CD4-positive, alpha-beta T cell (primary cell): ENCODE measurements at regions of chr12 and their contacts with region 1.

Region 1: DNA sequence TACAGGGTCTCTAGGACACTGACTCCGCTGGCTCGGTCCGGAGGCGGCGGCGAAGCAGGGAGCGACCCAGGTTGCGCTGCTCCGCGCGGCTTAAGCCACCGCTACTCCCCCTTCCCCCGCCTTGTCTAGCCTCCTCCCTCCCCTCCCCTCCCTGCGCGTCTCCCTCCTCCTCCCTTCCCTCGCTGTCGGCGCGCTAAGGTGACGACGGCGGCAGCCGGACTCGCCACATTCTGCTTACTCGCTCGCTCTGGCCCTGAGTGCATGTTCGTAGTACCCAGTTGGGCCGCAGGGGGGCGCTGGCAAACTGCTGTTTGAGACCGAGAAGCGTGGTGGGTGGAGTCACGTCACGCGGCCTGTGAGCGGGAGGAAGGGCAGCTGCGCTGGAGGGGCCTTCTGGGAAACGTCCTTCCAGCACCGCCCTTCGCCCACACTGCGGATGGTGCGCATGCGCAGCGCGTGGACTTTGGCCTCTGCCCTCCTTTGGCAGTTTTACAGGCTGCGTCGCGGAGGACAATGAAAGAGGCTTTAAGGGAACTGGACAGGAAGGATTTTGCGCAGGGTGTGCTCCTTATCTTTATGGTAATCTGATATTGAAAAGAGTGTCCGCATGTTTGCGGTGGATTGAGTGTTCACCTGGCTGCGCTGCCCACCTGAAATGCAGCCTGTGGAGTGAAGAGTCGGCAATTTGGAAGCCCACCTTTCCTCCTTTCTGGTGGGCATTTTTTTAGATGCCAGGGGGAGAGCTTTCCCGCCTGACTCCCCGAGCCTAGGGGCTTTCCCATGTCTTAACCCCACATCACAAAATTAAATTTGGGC is at the start of gene SCAF11:
- DNase-seq: peak; percentile 100
- ATAC-seq: peak; percentile 76
- H3K4me3 ChIP-seq: peak within 1 kb of the TSS; percentile 95
- H3K4me3 Mint-ChIP-seq: peak within 1 kb of the TSS; percentile 95
- H3K27ac ChIP-seq: peak within 1 kb of the TSS; percentile 98
- H3K27ac Mint-ChIP-seq: peak within 1 kb of the TSS; percentile 98
- H3K4me1 ChIP-seq: peaks cover 21% of the 10 kb centered on the region
- H3K4me1 Mint-ChIP-seq: peaks cover 56% of the 10 kb centered on the region
- H3K27me3 ChIP-seq: no peaks in the 10 kb centered on the region
- H3K27me3 Mint-ChIP-seq: peaks cover 4% of the 10 kb centered on the region
- CTCF ChIP-seq: peak; percentile 79
- total RNA-seq, gene SCAF11: 205 to 213 TPM

Region 2: GRCh38 chr12:46005151-46005797 is 14.6 kb after region 1 on chr12:
- CTCF ChIA-PET with region 1: interaction called, 3 read pairs
- POLR2A ChIA-PET with region 1: interaction called, 11 read pairs
- intact Hi-C with region 1: no loop called
- DNase-seq: peak in 3 of 14 experiments; percentile 36 to 40 (median 38)
- ATAC-seq: no peak
- H3K4me3 ChIP-seq: no peak overlapping the region
- H3K4me3 Mint-ChIP-seq: no peak overlapping the region
- H3K27ac ChIP-seq: no peak overlapping the region
- H3K27ac Mint-ChIP-seq: no peak overlapping the region
- H3K4me1 ChIP-seq: no peaks in the 10 kb centered on the region
- H3K4me1 Mint-ChIP-seq: no peaks in the 10 kb centered on the region
- H3K27me3 ChIP-seq: no peaks in the 10 kb centered on the region
- H3K27me3 Mint-ChIP-seq: no peaks in the 10 kb centered on the region
- CTCF ChIP-seq: peak; percentile 45

Region 3: GRCh38 chr12:46124848-46125619 is 134.4 kb after region 1 on chr12:
- CTCF ChIA-PET with region 1: interaction called, 7 read pairs
- POLR2A ChIA-PET with region 1: interaction called, 10 read pairs
- intact Hi-C with region 1: loop called in 1 of 2 experiments (anchors 5 kb)
- DNase-seq: peak in 13 of 14 experiments; percentile 16 to 87 (median 46)
- ATAC-seq: peak; percentile 97
- H3K4me3 ChIP-seq: no peak overlapping the region
- H3K4me3 Mint-ChIP-seq: peak overlapping the region; percentile 39
- H3K27ac ChIP-seq: no peak overlapping the region
- H3K27ac Mint-ChIP-seq: peak overlapping the region; percentile 62
- H3K4me1 ChIP-seq: no peaks in the 10 kb centered on the region
- H3K4me1 Mint-ChIP-seq: peaks cover 7% of the 10 kb centered on the region
- H3K27me3 ChIP-seq: no peaks in the 10 kb centered on the region
- H3K27me3 Mint-ChIP-seq: peaks cover 4% of the 10 kb centered on the region
- CTCF ChIP-seq: peak; percentile 49

Region 4: DNA sequence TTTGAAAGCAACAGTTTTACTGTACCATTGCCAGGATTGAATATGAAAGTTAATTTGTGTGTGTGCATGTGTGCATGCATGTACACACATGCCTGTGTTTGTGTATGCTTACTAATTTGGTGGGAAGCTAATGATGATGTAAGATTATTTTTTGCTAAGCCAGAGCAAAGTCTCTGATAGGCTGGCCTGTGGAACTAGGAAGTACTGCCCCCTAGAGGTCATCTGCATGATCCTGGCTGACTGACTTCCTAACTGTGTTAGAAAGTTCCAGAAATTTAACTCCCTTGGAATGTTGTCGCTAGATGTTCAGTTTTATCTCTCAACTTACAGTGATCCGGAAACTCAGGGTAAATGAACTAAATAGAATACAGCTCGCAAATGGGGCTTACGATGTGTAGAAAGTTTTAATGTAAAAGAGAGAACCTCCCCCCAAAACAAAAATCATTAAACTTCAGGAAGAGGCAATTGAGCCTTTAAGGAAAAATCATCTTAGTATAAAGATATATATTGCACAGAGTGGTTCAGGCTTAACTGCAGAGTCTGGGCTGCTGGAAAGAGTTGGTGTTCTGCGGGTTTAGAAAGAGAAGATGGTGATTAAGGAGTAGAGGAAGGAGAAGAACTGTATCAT is 312.5 kb after region 1 on chr12:
- CTCF ChIA-PET with region 1: interaction called, 7 read pairs
- POLR2A ChIA-PET with region 1: no interaction called
- intact Hi-C with region 1: loop called (anchors 1 to 5 kb)
- DNase-seq: peak; percentile 15 to 86 (median 44)
- ATAC-seq: peak; percentile 89
- H3K4me3 ChIP-seq: no peak overlapping the region
- H3K4me3 Mint-ChIP-seq: no peak overlapping the region
- H3K27ac ChIP-seq: no peak overlapping the region
- H3K27ac Mint-ChIP-seq: no peak overlapping the region
- H3K4me1 ChIP-seq: no peaks in the 10 kb centered on the region
- H3K4me1 Mint-ChIP-seq: peaks cover 18% of the 10 kb centered on the region
- H3K27me3 ChIP-seq: no peaks in the 10 kb centered on the region
- H3K27me3 Mint-ChIP-seq: no peaks in the 10 kb centered on the region
- CTCF ChIP-seq: peak; percentile 96

Region 5: DNA sequence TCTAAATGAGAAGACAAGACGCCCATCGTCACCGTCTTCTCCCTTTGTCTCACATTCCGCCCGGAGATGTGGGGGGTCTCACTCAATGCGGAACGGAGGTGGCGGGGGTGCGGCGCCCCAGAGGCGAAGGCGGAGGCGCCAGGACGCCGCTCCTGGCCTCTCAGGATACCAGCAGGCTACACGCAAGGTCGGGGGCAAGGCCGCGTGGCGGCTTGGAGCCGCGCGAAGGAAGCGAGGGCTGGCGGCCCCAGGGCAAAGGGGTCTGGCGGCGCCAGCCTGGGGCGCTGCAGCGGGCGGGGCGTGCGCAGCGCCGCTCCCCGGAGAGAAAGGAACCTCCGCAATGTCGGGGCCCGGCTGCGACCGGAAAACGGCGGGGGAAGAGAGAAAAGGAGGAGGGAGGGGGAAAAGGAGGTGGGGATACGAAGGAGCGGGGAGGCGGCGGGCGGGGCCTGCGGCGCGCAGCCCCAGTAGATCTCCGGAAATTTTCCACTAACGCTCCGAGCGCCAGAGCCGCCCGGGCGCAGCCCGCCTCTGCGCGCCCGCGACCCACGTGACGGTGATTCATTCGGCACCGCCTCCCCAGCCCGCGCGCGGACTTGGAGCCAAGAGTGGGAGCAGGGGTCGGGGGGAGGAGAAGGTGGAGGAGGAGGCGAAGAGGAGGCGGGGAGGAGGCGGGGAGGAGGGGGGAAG is 392.4 kb after region 1 on chr12:
- CTCF ChIA-PET with region 1: no interaction called
- POLR2A ChIA-PET with region 1: interaction called, 4 read pairs
- intact Hi-C with region 1: loop called in 1 of 2 experiments (anchors 5 kb)
- DNase-seq: peak; percentile 74 to 97 (median 88)
- ATAC-seq: peak; percentile 73
- H3K4me3 ChIP-seq: peak overlapping the region; percentile 83
- H3K4me3 Mint-ChIP-seq: peak overlapping the region; percentile 93
- H3K27ac ChIP-seq: peak overlapping the region; percentile 83 to 90
- H3K27ac Mint-ChIP-seq: peak overlapping the region; percentile 99
- H3K4me1 ChIP-seq: peaks cover 16% of the 10 kb centered on the region
- H3K4me1 Mint-ChIP-seq: peaks cover 44% of the 10 kb centered on the region
- H3K27me3 ChIP-seq: no peaks in the 10 kb centered on the region
- H3K27me3 Mint-ChIP-seq: no peaks in the 10 kb centered on the region
- CTCF ChIP-seq: peak; percentile 4

Region 6: DNA sequence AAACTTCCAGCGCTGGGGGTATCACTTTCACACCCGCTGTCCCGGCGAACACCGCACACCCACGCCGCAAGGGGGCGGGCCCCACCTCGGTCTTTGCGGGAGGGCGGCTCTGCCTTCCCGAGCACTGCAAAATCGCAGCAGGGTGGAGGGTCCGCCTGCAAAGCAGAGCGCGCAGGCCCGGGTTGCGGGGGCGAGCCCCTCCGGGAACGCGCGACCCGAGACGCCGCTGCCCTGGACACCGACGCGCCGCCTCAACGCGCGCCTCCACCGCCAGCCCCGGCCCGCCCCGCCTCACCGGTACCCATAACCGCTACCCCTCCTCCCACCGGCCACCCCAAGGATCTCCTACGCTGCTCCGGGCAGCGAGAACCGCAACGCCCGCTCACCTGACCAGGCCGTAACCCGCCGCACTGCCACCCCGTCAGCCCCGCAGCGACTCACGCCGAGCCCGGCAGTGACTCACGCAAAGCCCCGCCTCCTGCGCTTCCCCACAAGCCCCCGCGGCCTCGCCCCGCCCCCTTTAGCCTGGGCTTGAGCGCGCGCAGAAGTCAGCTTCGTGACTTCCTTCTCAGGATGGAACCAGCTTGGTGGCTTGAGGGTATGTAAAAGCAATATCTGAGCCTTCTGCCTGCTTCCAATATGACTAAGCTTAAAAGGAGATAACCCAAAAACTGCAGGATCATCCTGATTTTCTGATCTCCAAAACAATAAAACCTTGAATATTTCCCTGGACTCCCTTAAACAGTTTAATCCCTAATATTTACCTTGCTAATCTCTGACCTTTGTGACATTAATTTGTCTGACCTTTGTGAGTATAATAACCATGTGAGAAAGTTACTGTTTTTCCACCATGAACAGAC is 1715.1 kb after region 1 on chr12 and contains the start of gene RPAP3:
- CTCF ChIA-PET with region 1: no interaction called
- POLR2A ChIA-PET with region 1: no interaction called
- intact Hi-C with region 1: loop called in 1 of 2 experiments (anchors 5 kb)
- DNase-seq: peak; percentile 92 to 99 (median 97)
- ATAC-seq: peak; percentile 93
- H3K4me3 ChIP-seq: peak within 1 kb of the TSS; percentile 77
- H3K4me3 Mint-ChIP-seq: peak within 1 kb of the TSS; percentile 99
- H3K27ac ChIP-seq: peak within 1 kb of the TSS; percentile 81
- H3K27ac Mint-ChIP-seq: peak within 1 kb of the TSS; percentile 94
- H3K4me1 ChIP-seq: peaks cover 37% of the 10 kb centered on the region
- H3K4me1 Mint-ChIP-seq: peaks cover 68% of the 10 kb centered on the region
- H3K27me3 ChIP-seq: no peaks in the 10 kb centered on the region
- H3K27me3 Mint-ChIP-seq: no peaks in the 10 kb centered on the region
- CTCF ChIP-seq: peak; percentile 76
- total RNA-seq, gene RPAP3: 24.6 to 26.4 TPM